Heart right ventricle (tissue), 16 donors: ENCODE measurements at regions of chr2 and their contacts with region 1.

Region 1: GRCh38 chr2:175559613-175560012 is 378.1 kb upstream of the ATP5MC3 start:
- DNase-seq: no peak
- ATAC-seq: no peak
- H3K4me3 ChIP-seq: no peak overlapping the region
- H3K27ac ChIP-seq: no peak overlapping the region
- H3K4me1 ChIP-seq: no peaks in the 10 kb centered on the region
- H3K27me3 ChIP-seq: peaks cover 0 to 17% (median 0%) of the 10 kb centered on the region in 7 donors
- CTCF ChIP-seq: no peak

Region 2: DNA sequence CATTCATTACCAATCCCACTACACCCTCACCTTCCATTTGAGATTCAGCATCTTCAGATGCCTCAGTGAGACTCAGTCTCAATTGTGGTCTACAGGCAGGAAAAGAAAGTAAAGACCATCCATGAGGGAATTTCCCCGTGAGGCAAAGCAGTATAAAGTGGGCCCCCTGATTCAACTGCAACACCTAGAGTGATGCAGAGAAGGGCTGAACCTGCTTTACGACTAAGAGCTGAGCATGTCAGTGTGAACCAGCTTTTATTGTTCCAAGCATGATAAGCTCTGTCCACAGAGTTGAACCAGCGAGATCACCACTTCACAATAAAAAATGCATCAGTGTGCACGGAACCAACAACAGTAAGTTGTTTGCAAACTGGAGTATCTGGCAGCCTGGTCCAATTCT is 20.5 kb before region 1 on chr2:
- intact Hi-C with region 1: loop called in 1 of 10 experiments (anchors 1 kb)
- DNase-seq: no peak
- ATAC-seq: no peak
- H3K4me3 ChIP-seq: no peak overlapping the region
- H3K27ac ChIP-seq: no peak overlapping the region
- H3K4me1 ChIP-seq: no peaks in the 10 kb centered on the region
- H3K27me3 ChIP-seq: no peaks in the 10 kb centered on the region
- CTCF ChIP-seq: no peak

Region 3: GRCh38 chr2:175647058-175647457 is 87.4 kb after region 1 on chr2:
- intact Hi-C with region 1: no loop called
- DNase-seq: no peak
- ATAC-seq: no peak
- H3K4me3 ChIP-seq: no peak overlapping the region
- H3K27ac ChIP-seq: no peak overlapping the region
- H3K4me1 ChIP-seq: no peaks in the 10 kb centered on the region
- H3K27me3 ChIP-seq: no peaks in the 10 kb centered on the region
- CTCF ChIP-seq: no peak